ENCODE measurements at regions of chr14 and their contacts with region 1.

Region 1: DNA sequence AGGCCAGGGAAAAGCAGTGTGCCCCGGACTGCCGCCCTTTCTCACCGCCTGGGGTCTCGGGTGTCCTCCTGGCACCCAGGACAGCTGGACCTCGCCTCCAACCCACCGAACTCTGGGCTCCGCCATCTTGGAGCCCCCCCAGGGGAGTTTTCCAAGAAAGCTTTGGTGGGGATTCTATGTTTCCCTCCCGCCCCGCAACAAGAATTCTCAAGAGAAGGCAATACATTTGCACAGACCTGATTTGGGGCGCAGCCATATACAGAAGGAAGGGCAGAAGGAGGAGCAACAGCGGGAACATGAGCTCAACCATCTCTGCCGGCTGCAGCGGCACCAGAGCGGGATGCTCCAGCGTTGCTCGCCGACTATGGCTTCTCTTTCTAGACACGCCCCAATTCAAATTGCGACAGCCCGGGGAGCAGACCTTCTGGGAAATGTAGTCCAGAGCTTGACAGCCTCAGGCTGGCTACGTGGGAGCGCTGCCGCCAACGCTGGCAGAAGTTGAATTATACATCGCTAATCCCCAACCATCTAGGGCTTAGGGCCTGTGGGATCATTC is at the start of gene RDH11:
- DNase-seq: peak; percentile 59
- ATAC-seq: peak; percentile 94
- H3K4me3 Mint-ChIP-seq: peak within 1 kb of the TSS; percentile 89
- H3K27ac Mint-ChIP-seq: peak within 1 kb of the TSS; percentile 88
- H3K4me1 Mint-ChIP-seq: peaks cover 13% of the 10 kb centered on the region
- H3K27me3 Mint-ChIP-seq: no peaks in the 10 kb centered on the region
- CTCF ChIP-seq: no peak
- total RNA-seq, gene RDH11: 33.0 and 34.7 TPM in 2 replicates

Region 2: DNA sequence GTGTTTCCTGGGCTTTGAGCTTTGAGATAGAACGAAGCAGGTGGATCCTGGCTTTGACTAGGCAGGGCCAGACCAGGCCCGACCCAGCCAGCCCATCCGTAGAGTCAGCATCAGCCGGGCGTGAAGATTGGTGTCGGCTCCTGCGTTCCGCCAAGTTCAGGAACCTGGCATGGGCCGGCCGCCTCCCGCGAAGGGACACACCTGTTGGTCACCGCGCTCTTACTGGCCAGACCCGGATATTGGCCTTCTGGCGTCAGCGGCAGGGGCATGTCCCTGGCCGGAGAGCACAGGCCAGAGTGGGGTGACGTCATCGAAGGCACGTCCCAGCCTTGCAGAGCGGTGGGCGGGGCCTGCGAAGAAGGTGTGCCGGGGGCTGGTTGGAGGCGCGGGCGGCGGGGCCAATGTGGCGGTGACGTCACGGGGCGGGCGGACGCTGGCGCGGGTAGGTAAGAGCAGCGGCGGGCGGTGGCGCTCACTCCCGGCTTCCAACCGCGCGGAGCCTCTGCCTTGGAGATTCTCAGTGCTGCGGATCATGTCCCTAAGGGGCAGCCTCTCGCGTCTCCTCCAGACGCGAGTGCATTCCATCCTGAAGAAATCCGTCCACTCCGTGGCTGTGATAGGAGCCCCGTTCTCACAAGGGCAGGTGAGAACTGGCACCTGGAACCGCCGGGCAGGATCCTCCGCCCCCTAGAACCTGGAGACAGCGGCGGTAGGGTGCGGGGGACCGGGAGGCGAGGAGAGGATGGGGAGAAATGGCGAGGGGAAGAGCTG is 75.8 kb before region 1 on chr14 and contains the start of gene ARG2:
- CTCF ChIA-PET with region 1: no interaction called
- POLR2A ChIA-PET with region 1: interaction called, 3 read pairs
- intact Hi-C with region 1: loop called (anchors 1 kb)
- DNase-seq: peak; percentile 95
- ATAC-seq: peak; percentile 94
- H3K4me3 Mint-ChIP-seq: peak within 1 kb of the TSS; percentile 88
- H3K27ac Mint-ChIP-seq: peak within 1 kb of the TSS; percentile 79
- H3K4me1 Mint-ChIP-seq: peaks cover 25% of the 10 kb centered on the region
- H3K27me3 Mint-ChIP-seq: no peaks in the 10 kb centered on the region
- CTCF ChIP-seq: no peak
- total RNA-seq, gene ARG2: 0.40 and 0.46 TPM in 2 replicates

Region 3: GRCh38 chr14:67643671-67644070 is 51.8 kb before region 1 on chr14:
- CTCF ChIA-PET with region 1: no interaction called
- POLR2A ChIA-PET with region 1: interaction called, 12 read pairs
- intact Hi-C with region 1: no loop called
- DNase-seq: no peak
- ATAC-seq: no peak
- H3K4me3 Mint-ChIP-seq: no peak overlapping the region
- H3K27ac Mint-ChIP-seq: no peak overlapping the region
- H3K4me1 Mint-ChIP-seq: no peaks in the 10 kb centered on the region
- H3K27me3 Mint-ChIP-seq: no peaks in the 10 kb centered on the region
- CTCF ChIP-seq: no peak

Region 4: DNA sequence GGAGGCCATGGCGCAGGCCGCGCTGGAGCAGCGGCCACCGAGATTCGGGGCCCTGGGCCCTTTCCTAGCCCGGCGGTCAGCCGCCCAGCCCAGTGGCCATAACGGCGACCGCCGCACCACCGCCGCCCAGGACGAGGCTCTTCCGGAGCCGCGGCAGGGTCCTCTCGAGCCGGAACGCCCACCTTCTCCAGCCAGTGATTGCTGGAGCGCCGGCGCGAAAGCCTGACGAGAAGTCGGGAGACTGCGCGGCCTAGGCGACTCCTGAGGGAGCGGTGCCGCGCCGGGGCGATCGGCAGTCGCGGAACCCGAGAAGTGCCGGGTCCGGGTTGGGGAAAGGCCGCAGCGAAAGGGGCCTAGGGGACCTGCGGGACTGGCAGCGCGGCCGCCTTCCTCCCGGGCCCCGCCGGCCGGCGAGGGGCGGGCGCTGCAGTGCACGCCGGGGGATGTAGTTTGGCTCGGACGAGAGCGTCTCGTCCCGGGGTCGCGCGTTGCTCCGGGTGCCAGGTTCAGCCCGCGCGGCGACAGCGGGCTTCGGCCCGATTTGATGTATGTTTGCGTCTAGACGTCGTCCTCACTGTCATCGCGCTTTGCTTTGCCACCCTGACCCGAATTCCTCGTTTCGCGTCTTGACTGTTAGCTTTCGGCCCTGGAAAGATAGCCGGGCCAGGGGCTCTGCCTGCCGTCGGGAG is 20.8 kb before region 1 on chr14 and contains the start of gene VTI1B:
- CTCF ChIA-PET with region 1: no interaction called
- POLR2A ChIA-PET with region 1: interaction called, 21 read pairs
- intact Hi-C with region 1: loop called (anchors 1 kb)
- DNase-seq: peak; percentile 86
- ATAC-seq: peak; percentile 93
- H3K4me3 Mint-ChIP-seq: peak within 1 kb of the TSS; percentile 89
- H3K27ac Mint-ChIP-seq: peak within 1 kb of the TSS; percentile 89
- H3K4me1 Mint-ChIP-seq: peaks cover 36% of the 10 kb centered on the region
- H3K27me3 Mint-ChIP-seq: no peaks in the 10 kb centered on the region
- CTCF ChIP-seq: no peak
- total RNA-seq, gene VTI1B: 76.3 and 78.9 TPM in 2 replicates

Region 5: DNA sequence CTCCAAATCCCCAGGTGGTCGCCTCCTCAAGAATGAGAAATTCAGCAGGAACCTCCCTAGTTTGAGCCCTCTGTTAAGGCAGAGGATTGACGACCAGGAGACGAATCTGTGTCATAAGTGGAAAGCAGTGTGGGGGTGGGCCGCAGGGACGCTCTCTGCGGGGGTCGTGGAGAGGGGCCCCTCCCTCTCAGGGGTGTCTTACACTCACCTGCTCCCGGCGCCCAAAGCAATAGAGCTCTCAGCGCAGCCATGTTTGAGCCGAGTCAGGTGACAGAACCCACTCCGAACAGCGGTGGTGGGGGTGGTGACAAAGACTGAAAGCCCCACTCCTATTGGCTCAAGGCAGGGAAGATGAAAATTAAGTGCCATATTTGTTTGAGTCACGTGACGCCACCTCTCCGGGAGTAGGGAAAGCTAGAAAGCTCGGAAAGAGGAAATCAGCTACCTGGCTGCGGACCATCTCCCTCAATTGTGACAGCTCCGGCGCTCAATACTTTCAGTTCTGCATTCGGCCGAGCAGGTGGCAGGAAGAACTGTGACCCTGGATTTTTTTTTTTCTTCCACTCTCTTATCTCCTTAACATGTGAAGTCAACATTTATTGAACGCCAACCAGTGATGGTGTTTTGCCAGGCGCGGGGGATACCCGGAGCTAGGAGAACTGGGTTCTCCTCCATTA is 121.0 kb after region 1 on chr14 and contains the start of gene ZFYVE26:
- CTCF ChIA-PET with region 1: no interaction called
- POLR2A ChIA-PET with region 1: no interaction called
- intact Hi-C with region 1: loop called (anchors 1 kb)
- DNase-seq: peak; percentile 70
- ATAC-seq: peak; percentile 85
- H3K4me3 Mint-ChIP-seq: peak within 1 kb of the TSS; percentile 94
- H3K27ac Mint-ChIP-seq: peak within 1 kb of the TSS; percentile 95
- H3K4me1 Mint-ChIP-seq: peaks cover 63% of the 10 kb centered on the region
- H3K27me3 Mint-ChIP-seq: no peaks in the 10 kb centered on the region
- CTCF ChIP-seq: no peak
- total RNA-seq, gene ZFYVE26: 40.7 and 41.1 TPM in 2 replicates

Measured in activated B cell treated with CpG ODN at 0.5 μM for 24 hours (primary cell).